ENCODE measurements at regions of chr7 and their contacts with region 1.

Region 1: GRCh38 chr7:76047811-76048667 is at the starts of genes MDH2 and STYXL1:
- DNase-seq: peak; percentile 95
- ATAC-seq: peak; percentile 95
- H3K4me3 ChIP-seq: peak within 1 kb of the TSS; percentile 77
- H3K27ac ChIP-seq: peak within 1 kb of the TSS; percentile 84
- H3K4me1 ChIP-seq: peaks cover 5% of the 10 kb centered on the region
- H3K27me3 ChIP-seq: no peaks in the 10 kb centered on the region
- CTCF ChIP-seq: peak; percentile 1; the same call in 1 of the 2 replicates
- POLR2A ChIP-seq: peak; percentile 89
- RAD21 ChIP-seq: no peak
- total RNA-seq, gene MDH2: 55.4 and 56.1 TPM in 2 replicates
- total RNA-seq, gene STYXL1: 70.0 and 73.8 TPM in 2 replicates

Region 2: GRCh38 chr7:75534727-75535307 is 513.2 kb before region 1 on chr7:
- CTCF ChIA-PET with region 1: no interaction called
- POLR2A ChIA-PET with region 1: no interaction called
- dilution Hi-C with region 1: no loop called
- in situ Hi-C with region 1: loop called (anchors 25 kb)
- intact Hi-C with region 1: no loop called
- DNase-seq: peak; percentile 85
- ATAC-seq: peak; percentile 87
- H3K4me3 ChIP-seq: no peak overlapping the region
- H3K27ac ChIP-seq: no peak overlapping the region; the same call in 1 of the 2 replicates
- H3K4me1 ChIP-seq: peaks cover 7% of the 10 kb centered on the region
- H3K27me3 ChIP-seq: peaks cover 6% of the 10 kb centered on the region; the same call in 1 of the 2 replicates
- CTCF ChIP-seq: no peak
- POLR2A ChIP-seq: no peak
- RAD21 ChIP-seq: no peak

Region 3: GRCh38 chr7:75694638-75695399 is 353.2 kb before region 1 on chr7:
- CTCF ChIA-PET with region 1: no interaction called
- POLR2A ChIA-PET with region 1: no interaction called
- dilution Hi-C with region 1: no loop called
- in situ Hi-C with region 1: no loop called
- intact Hi-C with region 1: no loop called
- DNase-seq: no peak
- ATAC-seq: no peak
- H3K4me3 ChIP-seq: no peak overlapping the region
- H3K27ac ChIP-seq: no peak overlapping the region
- H3K4me1 ChIP-seq: no peaks in the 10 kb centered on the region
- H3K27me3 ChIP-seq: no peaks in the 10 kb centered on the region
- CTCF ChIP-seq: no peak
- POLR2A ChIP-seq: no peak
- RAD21 ChIP-seq: no peak

Region 4: GRCh38 chr7:75819711-75820110 is 228.3 kb before region 1 on chr7:
- CTCF ChIA-PET with region 1: no interaction called
- POLR2A ChIA-PET with region 1: no interaction called
- dilution Hi-C with region 1: no loop called
- in situ Hi-C with region 1: no loop called
- intact Hi-C with region 1: no loop called
- DNase-seq: no peak
- ATAC-seq: no peak
- H3K4me3 ChIP-seq: no peak overlapping the region
- H3K27ac ChIP-seq: no peak overlapping the region
- H3K4me1 ChIP-seq: no peaks in the 10 kb centered on the region
- H3K27me3 ChIP-seq: peaks cover 20% of the 10 kb centered on the region
- CTCF ChIP-seq: no peak
- POLR2A ChIP-seq: no peak
- RAD21 ChIP-seq: no peak

Region 5: DNA sequence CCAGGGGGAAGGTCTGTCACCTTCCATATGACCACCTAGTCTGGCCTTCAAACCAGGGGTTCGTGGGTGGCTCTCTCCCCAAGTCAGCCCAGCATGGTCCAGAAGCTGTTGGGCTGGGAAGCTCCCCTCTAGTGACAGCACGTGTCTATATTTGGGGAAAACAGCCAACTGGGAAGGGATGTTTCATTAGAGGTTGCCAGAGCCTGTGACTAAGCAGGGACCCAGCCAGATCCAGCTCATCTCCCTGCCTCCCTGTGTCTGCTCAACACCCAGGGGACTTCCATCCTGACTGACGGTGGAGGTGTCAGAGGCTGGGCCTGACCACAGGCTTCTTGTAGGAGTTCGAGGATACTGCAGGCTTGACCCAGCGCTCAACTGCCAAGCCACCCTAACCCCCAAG is 10.7 kb before region 1 on chr7:
- CTCF ChIA-PET with region 1: interaction called, 14 read pairs
- POLR2A ChIA-PET with region 1: no interaction called
- dilution Hi-C with region 1: no loop called
- in situ Hi-C with region 1: no loop called
- intact Hi-C with region 1: no loop called
- DNase-seq: peak; percentile 92
- ATAC-seq: peak; percentile 95
- H3K4me3 ChIP-seq: no peak overlapping the region
- H3K27ac ChIP-seq: peak overlapping the region; percentile 28
- H3K4me1 ChIP-seq: peaks cover 6% of the 10 kb centered on the region
- H3K27me3 ChIP-seq: no peaks in the 10 kb centered on the region
- CTCF ChIP-seq: no peak
- POLR2A ChIP-seq: no peak
- RAD21 ChIP-seq: no peak

Region 6: DNA sequence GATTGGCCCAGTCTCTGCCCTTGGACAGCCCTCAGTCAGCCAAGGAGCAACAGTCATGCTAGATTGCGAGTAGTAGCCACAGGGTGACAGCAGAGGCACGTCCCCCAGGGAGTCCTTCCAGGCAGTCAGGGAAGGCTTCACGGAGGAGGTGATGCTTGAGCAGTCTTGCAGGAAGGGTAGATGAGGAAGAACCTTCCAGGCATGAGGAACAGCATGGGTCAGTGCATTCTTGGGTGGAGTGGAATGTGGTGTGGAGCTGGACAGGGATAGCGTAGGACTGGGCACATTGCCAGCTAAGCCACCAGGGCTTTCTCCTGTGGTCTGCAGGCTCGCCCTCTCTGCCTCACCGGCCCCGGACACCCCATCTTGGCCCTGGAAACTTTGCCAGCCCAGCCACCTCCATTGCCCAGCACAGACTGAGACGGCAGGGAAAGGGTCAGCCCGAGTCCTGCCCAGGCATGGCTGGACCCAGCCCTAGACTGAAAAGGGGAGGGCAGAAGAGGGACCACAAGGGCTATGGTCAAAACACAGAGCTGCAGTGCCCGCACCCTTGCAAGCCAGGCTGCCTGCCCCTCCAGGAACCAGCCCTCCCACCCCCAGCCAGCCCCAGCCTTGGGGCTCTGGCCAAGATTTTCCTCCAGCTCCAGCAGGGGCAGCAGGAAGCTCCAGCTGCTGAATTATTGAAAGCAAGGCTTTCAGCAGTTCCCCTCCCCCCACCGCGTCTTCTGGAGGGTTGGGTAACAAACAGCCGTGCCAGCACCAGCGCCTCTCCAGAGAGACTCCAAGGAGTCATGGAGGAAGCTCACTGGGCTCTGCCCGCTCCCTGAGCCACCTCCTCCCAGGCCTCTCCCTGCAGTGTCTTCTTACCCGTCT is 172.4 kb after region 1 on chr7:
- CTCF ChIA-PET with region 1: no interaction called
- POLR2A ChIA-PET with region 1: interaction called, 14 read pairs
- dilution Hi-C with region 1: no loop called
- in situ Hi-C with region 1: no loop called
- intact Hi-C with region 1: no loop called
- DNase-seq: peak; percentile 30
- ATAC-seq: peak; percentile 60
- H3K4me3 ChIP-seq: no peak overlapping the region
- H3K27ac ChIP-seq: no peak overlapping the region
- H3K4me1 ChIP-seq: peaks cover 2% of the 10 kb centered on the region; the same call in 1 of the 2 replicates
- H3K27me3 ChIP-seq: peaks cover 36% of the 10 kb centered on the region
- CTCF ChIP-seq: 0 out of 2 replicates have a peak, but pooled peaks have one; percentile 16
- POLR2A ChIP-seq: no peak
- RAD21 ChIP-seq: no peak